ENCODE measurements at regions of chr10 and their contacts with region 1.

Region 1: GRCh38 chr10:92278996-92279696 is 11.7 kb downstream of the CPEB3 start:
- DNase-seq: no peak
- H3K4me3 ChIP-seq: no peak overlapping the region
- H3K27me3 ChIP-seq: no peaks in the 10 kb centered on the region
- CTCF ChIP-seq: no peak

Region 2: DNA sequence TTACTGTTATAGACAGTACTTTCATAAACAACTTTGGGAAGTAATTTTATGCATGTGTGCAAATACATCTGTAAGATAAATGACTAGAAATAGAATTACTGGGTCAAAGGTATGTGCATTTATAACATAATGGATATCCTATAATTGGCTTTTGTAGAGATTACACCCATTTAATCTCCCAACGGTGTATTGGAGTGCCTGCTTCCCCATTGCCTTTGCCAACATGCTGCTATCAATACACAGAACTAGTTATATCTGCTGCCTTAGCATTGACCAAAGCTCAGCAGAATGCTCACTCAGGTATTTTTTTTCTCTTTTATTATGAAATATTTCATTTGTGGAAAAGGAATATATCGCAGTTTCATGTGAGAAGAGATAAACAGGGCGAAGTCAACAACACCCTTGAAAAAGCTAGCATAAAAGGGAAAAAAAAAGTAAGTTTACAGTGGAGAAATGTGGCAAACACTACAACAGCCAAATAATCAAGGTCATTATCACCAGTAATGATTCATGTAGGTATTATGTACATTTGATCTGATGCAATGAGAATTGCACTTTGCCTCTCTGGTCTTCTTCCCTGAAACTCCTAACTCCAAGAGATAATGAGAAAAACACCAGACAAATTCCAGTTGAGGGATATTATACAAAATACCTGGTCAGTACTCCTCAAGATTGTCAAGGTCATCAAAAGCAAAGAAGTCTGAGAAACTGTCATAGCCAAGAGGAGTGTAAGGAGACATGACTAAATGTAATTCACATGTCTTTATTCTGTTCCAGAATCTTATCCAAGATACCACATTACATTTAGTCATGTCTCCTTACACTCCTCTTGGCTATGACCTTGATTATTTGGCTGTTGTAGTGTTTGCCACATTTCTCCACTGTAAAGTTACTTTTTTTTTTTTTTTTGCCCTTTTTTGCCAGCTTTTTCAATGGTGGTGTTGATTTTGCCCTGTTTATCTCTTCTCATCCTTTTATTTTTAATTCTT is 48.6 kb after region 1 on chr10:
- CTCF ChIA-PET with region 1: no interaction called
- POLR2A ChIA-PET with region 1: interaction called, 11 read pairs
- DNase-seq: no peak
- H3K4me3 ChIP-seq: no peak overlapping the region
- H3K27me3 ChIP-seq: no peaks in the 10 kb centered on the region
- CTCF ChIP-seq: no peak